Gastrocnemius medialis (tissue), 4 donors: ENCODE measurements at regions of chr10 and their contacts with region 1.

Region 1: GRCh38 chr10:75235375-75236177 is at the start of gene COMTD1:
- DNase-seq: peak; percentile 94 to 96
- ATAC-seq: peak; percentile 62 to 70
- H3K4me3 ChIP-seq: peak within 1 kb of the TSS; percentile 85 to 94 (median 89)
- H3K27ac ChIP-seq: peak within 1 kb of the TSS; percentile 84 to 95 (median 92)
- H3K4me1 ChIP-seq: peaks cover 3 to 6% of the 10 kb centered on the region in 2 donors
- H3K27me3 ChIP-seq: no peaks in the 10 kb centered on the region
- CTCF ChIP-seq: peak; percentile 100
- POLR2A ChIP-seq: peak; percentile 33 to 47
- total RNA-seq, gene COMTD1: 15.6 to 64.4 (median 34.9) TPM

Region 2: DNA sequence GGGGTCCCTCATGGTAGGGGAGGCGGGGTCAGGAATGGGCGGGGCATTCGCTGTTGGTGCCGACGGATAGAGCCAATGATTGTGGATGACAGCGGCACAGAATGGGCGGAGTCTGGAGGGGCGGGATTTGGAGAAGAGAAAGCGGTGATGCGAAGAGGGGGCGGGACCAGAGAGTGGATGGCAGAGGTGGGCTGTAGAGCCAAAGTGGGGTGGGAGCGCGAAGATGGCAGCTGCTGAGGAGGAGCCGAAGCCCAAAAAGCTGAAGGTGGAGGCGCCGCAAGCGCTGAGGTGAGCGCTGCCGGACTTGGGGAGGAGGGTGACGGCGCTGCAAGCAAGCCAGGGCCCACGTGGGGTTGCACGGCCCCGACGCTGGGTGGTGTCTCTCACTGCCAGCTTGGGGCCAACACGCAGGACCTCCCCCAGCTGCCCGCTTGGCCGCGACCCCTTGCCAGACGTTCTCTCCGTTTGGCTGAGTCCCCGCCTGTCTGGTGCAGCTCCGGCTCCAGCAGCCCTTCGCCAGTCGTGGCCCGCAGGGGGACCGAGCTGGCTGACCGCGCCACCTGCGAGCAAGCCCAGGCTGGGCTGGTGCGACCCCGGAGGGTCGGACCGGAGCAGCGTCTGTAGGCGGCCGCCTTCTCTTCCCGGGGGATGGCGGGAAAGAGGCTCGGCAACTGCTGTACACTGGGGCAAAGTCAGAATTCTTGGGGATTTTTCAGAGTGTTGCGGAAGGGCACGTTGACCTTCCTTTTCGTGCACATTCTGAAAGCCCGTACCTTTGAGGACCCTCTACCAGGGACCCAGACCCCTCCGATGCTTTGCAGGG is 1084.3 kb before region 1 on chr10 and contains the start of gene ADK:
- in situ Hi-C with region 1: no loop called
- intact Hi-C with region 1: loop called (anchors 10 kb)
- DNase-seq: peak; percentile 99
- ATAC-seq: peak; percentile 88 to 92
- H3K4me3 ChIP-seq: peak within 1 kb of the TSS; percentile 65 to 95 (median 84)
- H3K27ac ChIP-seq: peak within 1 kb of the TSS; percentile 89 to 97 (median 96)
- H3K4me1 ChIP-seq: peaks cover 38 to 52% of the 10 kb centered on the region in 2 donors
- H3K27me3 ChIP-seq: no peaks in the 10 kb centered on the region
- CTCF ChIP-seq: peak in 4 of 5 experiments; percentile 8 to 62 (median 34)
- POLR2A ChIP-seq: peak; percentile 83 to 93
- total RNA-seq, gene ADK: 15.9 to 28.8 (median 23.3) TPM

Region 3: DNA sequence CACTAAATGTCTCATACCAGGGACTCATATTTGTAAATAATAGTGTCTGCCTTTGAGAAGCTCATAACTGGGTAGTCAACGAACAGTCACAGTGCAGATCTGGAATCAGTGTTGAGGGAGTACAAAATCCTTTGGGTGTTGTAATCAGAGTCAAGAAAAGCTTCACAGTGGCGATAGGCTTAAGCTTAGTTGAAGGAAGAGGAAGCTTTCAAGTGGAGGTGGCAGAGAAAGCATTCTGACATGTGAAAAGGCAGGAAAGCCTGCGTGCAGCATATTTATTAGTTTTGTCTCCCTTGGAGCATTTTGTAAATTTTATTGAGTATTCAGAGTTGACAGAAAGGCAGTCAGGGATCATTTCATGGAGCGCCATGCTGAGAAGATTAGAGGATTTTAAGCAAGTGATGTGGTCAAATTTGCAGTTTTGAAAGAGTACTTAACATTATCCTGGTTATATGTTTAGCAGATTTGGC is 979.7 kb before region 1 on chr10:
- in situ Hi-C with region 1: loop called in 2 of 4 experiments (anchors 10 to 25 kb)
- intact Hi-C with region 1: no loop called
- DNase-seq: no peak
- ATAC-seq: no peak
- H3K4me3 ChIP-seq: no peak overlapping the region
- H3K27ac ChIP-seq: no peak overlapping the region
- H3K4me1 ChIP-seq: no peaks in the 10 kb centered on the region
- H3K27me3 ChIP-seq: no peaks in the 10 kb centered on the region
- CTCF ChIP-seq: no peak
- POLR2A ChIP-seq: no peak

Region 4: DNA sequence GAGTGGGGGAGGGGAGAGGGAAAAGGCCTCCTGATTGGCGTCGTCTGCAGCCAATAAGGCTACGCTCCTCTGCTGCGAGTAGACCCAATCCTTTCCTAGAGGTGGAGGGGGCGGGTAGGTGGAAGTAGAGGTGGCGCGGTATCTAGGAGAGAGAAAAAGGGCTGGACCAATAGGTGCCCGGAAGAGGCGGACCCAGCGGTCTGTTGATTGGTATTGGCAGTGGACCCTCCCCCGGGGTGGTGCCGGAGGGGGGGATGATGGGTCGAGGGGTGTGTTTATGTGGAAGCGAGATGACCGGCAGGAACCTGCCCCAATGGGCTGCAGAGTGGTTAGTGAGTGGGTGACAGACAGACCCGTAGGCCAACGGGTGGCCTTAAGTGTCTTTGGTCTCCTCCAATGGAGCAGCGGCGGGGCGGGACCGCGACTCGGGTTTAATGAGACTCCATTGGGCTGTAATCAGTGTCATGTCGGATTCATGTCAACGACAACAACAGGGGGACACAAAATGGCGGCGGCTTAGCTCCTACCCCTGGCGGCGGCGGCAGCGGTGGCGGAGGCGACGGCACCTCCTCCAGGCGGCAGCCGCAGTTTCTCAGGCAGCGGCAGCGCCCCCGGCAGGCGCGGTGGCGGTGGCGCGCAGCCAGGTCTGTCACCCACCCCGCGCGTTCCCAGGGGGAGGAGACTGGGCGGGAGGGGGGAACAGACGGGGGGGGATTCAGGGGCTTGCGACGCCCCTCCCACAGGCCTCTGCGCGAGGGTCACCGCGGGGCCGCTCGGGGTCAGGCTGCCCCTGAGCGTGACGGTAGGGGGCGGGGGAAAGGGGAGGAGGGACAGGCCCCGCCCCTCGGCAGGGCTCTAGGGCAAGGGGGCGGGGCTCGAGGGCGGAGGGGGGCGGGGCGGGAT is 409.2 kb before region 1 on chr10 and contains the start of gene KAT6B:
- in situ Hi-C with region 1: no loop called
- intact Hi-C with region 1: loop called (anchors 2 kb)
- DNase-seq: peak; percentile 100
- ATAC-seq: peak; percentile 81 to 83
- H3K4me3 ChIP-seq: peak within 1 kb of the TSS; percentile 92 to 97 (median 96)
- H3K27ac ChIP-seq: peak within 1 kb of the TSS; percentile 94 to 100 (median 98)
- H3K4me1 ChIP-seq: peaks cover 43 to 50% of the 10 kb centered on the region in 2 donors
- H3K27me3 ChIP-seq: no peaks in the 10 kb centered on the region
- CTCF ChIP-seq: peak in 1 of 5 experiments; percentile 9
- POLR2A ChIP-seq: peak; percentile 22 to 77
- total RNA-seq, gene KAT6B: 12.0 to 37.7 (median 21.6) TPM

Region 5: GRCh38 chr10:75111367-75111906 is 124.1 kb before region 1 on chr10 and contains the start of gene SAMD8:
- in situ Hi-C with region 1: no loop called
- intact Hi-C with region 1: loop called (anchors 1 kb)
- DNase-seq: peak; percentile 97 to 99
- ATAC-seq: peak; percentile 49 to 50
- H3K4me3 ChIP-seq: peak within 1 kb of the TSS; percentile 88 to 100 (median 94)
- H3K27ac ChIP-seq: peak within 1 kb of the TSS; percentile 97 to 100 (median 98)
- H3K4me1 ChIP-seq: peaks cover 67 to 72% of the 10 kb centered on the region in 2 donors
- H3K27me3 ChIP-seq: no peaks in the 10 kb centered on the region
- CTCF ChIP-seq: peak; percentile 17 to 78 (median 54)
- POLR2A ChIP-seq: peak; percentile 99
- total RNA-seq, gene SAMD8: 46.2 to 125 (median 68.9) TPM

Region 6: GRCh38 chr10:75210282-75211006 is 25.1 kb before region 1 on chr10 and contains the start of gene VDAC2:
- in situ Hi-C with region 1: no loop called
- intact Hi-C with region 1: loop called (anchors 2 kb)
- DNase-seq: peak; percentile 84 to 92
- ATAC-seq: peak; percentile 85
- H3K4me3 ChIP-seq: peak within 1 kb of the TSS; percentile 83 to 98 (median 93)
- H3K27ac ChIP-seq: peak within 1 kb of the TSS; percentile 98 to 100 (median 99)
- H3K4me1 ChIP-seq: peaks cover 34 to 55% of the 10 kb centered on the region in 2 donors
- H3K27me3 ChIP-seq: no peaks in the 10 kb centered on the region
- CTCF ChIP-seq: peak in 2 of 5 experiments; percentile 27 to 43
- POLR2A ChIP-seq: peak; percentile 95
- total RNA-seq, gene VDAC2: 255 to 442 (median 268) TPM